Activated B cell treated with CpG ODN at 0.5 μM for 24 hours (primary cell): ENCODE measurements at regions of chr6 and their contacts with region 1.

Region 1: DNA sequence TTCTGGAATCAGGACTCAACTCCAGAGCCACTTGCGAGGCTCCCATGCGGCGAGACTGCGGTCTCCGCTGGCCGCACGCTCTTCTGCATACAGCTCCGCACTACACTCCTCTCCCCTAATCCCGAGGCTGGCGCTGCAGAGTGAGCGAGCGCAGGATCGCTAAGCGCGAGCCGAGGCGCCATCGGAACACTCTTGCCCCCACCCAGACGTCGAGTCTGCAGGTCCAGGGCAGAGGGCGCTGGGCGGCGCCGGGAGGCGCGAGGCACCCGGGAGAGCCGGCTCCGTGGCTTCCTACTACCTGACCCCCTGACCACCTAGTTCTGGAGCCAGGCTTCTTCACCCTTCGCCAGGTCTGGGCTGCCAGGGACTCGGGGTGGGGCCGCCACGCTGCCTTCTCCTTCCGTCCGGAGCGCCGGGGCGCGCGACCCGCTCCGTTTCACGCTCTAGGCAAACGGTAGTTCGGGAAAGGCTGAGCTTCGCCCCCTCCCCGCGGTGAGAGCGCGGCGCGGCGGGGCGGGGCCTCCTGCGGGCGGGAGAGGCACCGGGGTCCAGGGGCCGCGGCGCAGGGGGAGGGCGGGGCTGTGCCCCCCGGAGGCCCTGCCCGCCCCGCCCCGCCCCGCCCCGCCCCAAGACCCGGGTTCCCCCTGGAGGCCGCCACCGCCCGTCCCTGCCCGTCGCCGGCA is 5.4 kb upstream of the TUBB2A start:
- DNase-seq: peak; percentile 70
- ATAC-seq: peak; percentile 82
- H3K4me3 Mint-ChIP-seq: peak overlapping the region; percentile 87
- H3K27ac Mint-ChIP-seq: peak overlapping the region; percentile 69
- H3K4me1 Mint-ChIP-seq: peaks cover 28% of the 10 kb centered on the region
- H3K27me3 Mint-ChIP-seq: peaks cover 2% of the 10 kb centered on the region
- CTCF ChIP-seq: no peak

Region 2: DNA sequence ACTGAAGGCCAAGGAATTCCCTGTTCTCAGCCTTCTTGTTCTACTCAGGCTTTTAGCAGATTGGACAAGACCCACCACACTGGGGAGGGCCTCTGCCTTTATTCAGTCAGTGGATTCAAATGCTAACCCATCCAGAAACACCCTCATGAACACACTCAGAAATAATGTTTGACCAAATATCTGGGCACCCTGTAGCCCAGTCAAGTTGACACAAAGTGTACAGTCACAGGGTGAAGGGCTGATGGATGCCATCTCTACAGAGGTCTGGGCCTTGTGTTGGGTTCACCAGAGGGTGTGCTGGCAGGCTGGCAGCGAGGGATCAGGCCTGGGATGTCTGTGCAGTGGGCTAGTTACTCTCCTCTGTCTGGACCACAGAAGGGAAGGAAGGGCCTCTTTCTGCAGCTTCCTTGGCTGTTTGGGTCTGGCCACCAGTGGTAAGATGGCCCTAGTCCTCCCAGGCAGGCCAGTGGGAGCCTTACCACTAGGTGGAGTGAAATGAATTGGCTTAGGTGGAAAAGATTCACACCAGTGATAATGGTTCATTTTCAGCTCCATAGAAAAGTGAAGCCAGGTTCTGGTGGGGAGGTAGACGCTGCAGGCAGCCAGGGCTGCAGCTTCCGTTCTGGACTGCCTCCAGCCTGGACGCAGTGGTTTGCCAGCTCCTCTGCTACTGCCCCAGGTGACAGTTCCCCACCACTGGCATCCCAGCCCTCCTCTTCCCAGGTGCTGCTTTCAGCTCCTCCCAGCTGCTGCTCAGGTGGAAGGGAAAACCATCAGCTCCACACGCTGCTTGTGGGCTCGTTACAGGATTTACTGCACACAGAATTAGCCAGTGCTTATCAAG is 14.6 kb before region 1 on chr6:
- CTCF ChIA-PET with region 1: no interaction called
- POLR2A ChIA-PET with region 1: no interaction called
- intact Hi-C with region 1: no loop called
- DNase-seq: no peak
- ATAC-seq: no peak
- H3K4me3 Mint-ChIP-seq: no peak overlapping the region
- H3K27ac Mint-ChIP-seq: no peak overlapping the region
- H3K4me1 Mint-ChIP-seq: peaks cover 3% of the 10 kb centered on the region
- H3K27me3 Mint-ChIP-seq: no peaks in the 10 kb centered on the region
- CTCF ChIP-seq: no peak

Region 3: GRCh38 chr6:3209114-3210023 is 46.7 kb after region 1 on chr6:
- CTCF ChIA-PET with region 1: no interaction called
- POLR2A ChIA-PET with region 1: no interaction called
- intact Hi-C with region 1: loop called (anchors 2 kb)
- DNase-seq: no peak
- ATAC-seq: peak; percentile 69
- H3K4me3 Mint-ChIP-seq: peak overlapping the region; percentile 28
- H3K27ac Mint-ChIP-seq: peak overlapping the region; percentile 74
- H3K4me1 Mint-ChIP-seq: peaks cover 26% of the 10 kb centered on the region
- H3K27me3 Mint-ChIP-seq: peaks cover 16% of the 10 kb centered on the region
- CTCF ChIP-seq: no peak

Region 4: DNA sequence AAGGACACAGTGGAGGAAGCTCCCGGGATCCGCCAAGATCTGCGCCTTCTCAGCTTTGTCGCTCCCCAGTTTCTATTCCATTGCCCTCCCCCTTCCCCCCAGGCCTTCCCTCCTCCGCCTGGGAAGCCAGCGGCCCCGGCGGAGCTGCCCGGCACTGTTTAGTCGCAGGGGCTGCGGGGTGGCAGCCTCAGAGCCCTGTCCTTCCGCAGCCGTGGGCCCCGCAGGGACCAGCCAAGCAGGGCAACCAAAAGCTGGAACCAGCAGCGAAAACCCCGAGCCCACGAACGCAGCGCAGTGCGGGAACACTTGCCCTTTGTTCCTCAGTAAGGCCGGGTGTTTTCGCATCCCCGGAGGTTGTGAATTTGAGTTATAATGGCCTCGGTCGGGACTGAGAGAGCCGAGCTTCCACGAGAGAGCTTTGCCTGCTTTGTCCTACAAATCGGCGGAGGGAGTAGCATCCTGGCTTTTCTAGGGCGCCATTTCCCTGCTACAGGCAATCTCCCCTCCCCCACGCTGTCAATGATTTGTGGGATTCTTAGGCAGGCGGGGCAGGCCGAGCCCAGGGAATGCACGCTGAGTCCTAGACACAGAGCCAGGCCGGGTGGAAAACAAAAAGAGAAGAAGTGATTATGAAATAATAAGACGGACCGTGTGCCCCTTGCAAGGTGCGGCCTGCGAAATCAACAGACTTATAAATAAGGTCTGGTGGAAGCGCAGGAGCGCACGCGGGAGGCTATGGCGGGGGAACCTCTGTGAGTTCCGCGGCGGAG is 68.7 kb after region 1 on chr6:
- CTCF ChIA-PET with region 1: no interaction called
- POLR2A ChIA-PET with region 1: interaction called, 4 read pairs
- intact Hi-C with region 1: loop called (anchors 1 kb)
- DNase-seq: no peak
- ATAC-seq: no peak
- H3K4me3 Mint-ChIP-seq: peak overlapping the region; percentile 21
- H3K27ac Mint-ChIP-seq: no peak overlapping the region
- H3K4me1 Mint-ChIP-seq: peaks cover 47% of the 10 kb centered on the region
- H3K27me3 Mint-ChIP-seq: peaks cover 65% of the 10 kb centered on the region
- CTCF ChIP-seq: no peak